ENCODE measurements at regions of chr1 and their contacts with region 1.

Region 1: GRCh38 chr1:192808518-192809306 is at the start of gene RGS2:
- DNase-seq: peak; percentile 92
- H3K4me3 ChIP-seq: peak within 1 kb of the TSS; percentile 93
- H3K27ac ChIP-seq: peak within 1 kb of the TSS; percentile 59
- H3K27me3 ChIP-seq: no peaks in the 10 kb centered on the region
- CTCF ChIP-seq: no peak
- polyA plus RNA-seq, gene RGS2: 60.5 and 80.3 TPM in 2 replicates

Region 2: GRCh38 chr1:192700834-192701271 is 107.9 kb before region 1 on chr1:
- CTCF ChIA-PET with region 1: no interaction called
- POLR2A ChIA-PET with region 1: interaction called, 16 read pairs
- DNase-seq: peak; percentile 82
- H3K4me3 ChIP-seq: no peak overlapping the region
- H3K27ac ChIP-seq: no peak overlapping the region
- H3K27me3 ChIP-seq: no peaks in the 10 kb centered on the region
- CTCF ChIP-seq: no peak

Region 3: GRCh38 chr1:193013005-193013404 is 204.3 kb after region 1 on chr1:
- CTCF ChIA-PET with region 1: interaction called, 56 read pairs
- POLR2A ChIA-PET with region 1: interaction called, 12 read pairs
- DNase-seq: peak; percentile 37
- H3K4me3 ChIP-seq: no peak overlapping the region
- H3K27ac ChIP-seq: no peak overlapping the region
- H3K27me3 ChIP-seq: no peaks in the 10 kb centered on the region
- CTCF ChIP-seq: no peak

Region 4: GRCh38 chr1:193019442-193020026 is 210.8 kb after region 1 on chr1:
- CTCF ChIA-PET with region 1: interaction called, 56 read pairs
- POLR2A ChIA-PET with region 1: interaction called, 16 read pairs
- DNase-seq: peak; percentile 27
- H3K4me3 ChIP-seq: no peak overlapping the region
- H3K27ac ChIP-seq: no peak overlapping the region
- H3K27me3 ChIP-seq: no peaks in the 10 kb centered on the region
- CTCF ChIP-seq: peak; percentile 54

Region 5: DNA sequence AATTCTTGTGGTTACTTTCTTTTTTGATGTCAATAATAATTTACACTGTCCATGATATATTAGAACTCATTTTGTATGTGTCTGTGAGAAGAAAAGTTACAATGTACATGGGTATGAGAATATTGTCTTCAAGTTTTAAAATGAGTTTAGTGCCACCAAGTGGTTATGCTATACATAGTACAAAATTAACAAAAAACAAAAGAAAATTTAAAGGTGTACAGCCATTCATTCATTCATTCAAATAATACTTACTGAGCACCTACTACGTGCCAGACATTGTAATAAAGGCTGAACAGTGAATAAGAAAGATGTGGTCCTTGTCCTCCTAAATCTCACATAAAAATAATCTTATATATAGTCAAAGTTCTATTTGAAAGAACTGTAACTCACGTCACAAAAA is 222.7 kb after region 1 on chr1:
- CTCF ChIA-PET with region 1: interaction called, 13 read pairs
- POLR2A ChIA-PET with region 1: no interaction called
- DNase-seq: no peak
- H3K4me3 ChIP-seq: no peak overlapping the region
- H3K27ac ChIP-seq: no peak overlapping the region
- H3K27me3 ChIP-seq: no peaks in the 10 kb centered on the region
- CTCF ChIP-seq: peak; percentile 40